Activated naive CD4-positive, alpha-beta T cell treated with anti-CD3 and anti-CD28 coated beads, Interleukin-2, amount 10 ng/mL, durations not matched to agents 7 days and 5 days (primary cell): ENCODE measurements at regions of chr15 and their contacts with region 1.

Region 1: DNA sequence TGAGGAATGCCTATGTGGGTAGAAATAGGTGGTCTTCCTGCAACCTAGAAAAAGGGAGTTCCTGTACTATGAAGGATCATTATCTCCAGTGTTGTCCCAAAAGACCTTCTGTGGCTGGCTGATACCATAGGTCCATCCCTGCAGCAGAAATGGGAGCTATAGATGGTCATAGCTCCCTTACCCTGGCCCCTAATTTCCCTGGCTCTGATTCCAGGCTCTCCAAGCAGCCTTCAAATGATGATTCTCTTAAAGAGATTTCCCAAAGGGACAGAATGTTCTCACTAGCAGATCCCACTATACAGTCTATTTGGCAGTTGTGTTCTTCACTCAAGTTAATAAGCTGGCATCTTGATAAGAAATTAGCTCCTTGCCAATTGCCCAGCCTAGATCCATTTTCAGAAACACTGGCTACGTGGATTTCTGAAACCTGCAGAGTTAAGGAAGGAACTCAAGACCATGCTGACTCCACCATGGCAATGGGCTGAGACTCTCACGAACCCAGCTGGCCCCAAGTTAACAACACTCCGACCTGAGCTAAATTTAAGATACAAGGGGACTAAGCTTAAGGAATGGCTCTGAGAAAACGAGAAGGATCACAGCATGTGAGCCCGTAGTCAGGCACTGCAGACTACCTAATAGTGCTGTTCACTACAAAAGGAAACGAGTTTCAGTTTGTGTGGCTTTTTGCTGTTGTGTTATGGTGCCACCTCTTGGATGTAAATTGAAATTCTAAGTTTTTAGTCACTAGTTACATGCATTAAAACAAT is 11.4 kb downstream of the C15orf40 start:
- DNase-seq: peak; percentile 55
- H3K4me3 Mint-ChIP-seq: peak overlapping the region; percentile 47
- H3K27ac Mint-ChIP-seq: no peak overlapping the region
- H3K4me1 Mint-ChIP-seq: peaks cover 8% of the 10 kb centered on the region
- H3K27me3 Mint-ChIP-seq: no peaks in the 10 kb centered on the region

Region 2: DNA sequence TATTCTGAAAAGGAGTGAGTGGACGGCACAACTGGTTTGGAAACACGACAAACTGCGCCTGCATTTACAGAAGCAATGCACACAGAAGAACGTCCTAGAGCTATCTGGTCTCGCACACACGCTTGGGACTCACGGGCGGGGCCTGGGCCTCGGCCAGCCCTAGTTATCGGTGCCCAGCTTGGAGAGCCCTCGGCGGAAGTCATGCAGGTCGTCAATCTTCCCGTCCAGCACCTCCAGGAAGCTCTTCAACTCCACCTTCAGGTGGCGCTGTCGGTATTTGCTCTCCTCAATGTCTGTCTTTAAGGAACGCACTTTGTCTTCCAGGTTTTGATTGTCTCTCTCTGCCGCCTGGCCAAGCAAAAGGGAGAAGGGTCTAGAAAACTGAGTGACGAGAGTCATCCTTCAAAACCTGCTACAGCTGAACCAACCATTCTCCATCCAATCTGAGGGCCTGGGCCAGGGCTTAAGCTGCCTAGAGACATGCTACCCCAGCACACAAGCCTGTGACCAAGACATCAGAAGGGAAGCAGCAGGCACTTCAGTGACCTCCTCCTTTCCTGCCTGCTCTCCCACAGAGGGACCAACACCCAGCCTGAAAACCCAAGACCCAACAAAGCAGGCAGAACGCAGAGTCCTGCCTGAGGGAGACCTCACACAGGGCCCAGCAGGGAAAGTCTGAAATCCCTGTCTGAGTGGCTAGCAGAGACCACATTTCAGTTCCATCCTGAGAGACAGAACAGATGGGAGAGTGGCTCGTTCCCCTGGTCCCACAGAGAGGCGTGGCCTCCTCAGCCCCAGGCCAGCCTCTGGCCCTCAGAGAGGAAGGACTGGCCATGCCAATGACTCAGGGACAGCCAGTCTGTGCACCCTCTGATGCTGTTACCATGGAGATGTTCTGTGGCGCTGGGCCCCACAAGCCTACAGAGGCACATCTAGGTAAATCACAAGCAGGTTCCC is 150.3 kb before region 1 on chr15:
- CTCF ChIA-PET with region 1: interaction called, 61 read pairs
- DNase-seq: peak; percentile 77
- H3K4me3 Mint-ChIP-seq: no peak overlapping the region
- H3K27ac Mint-ChIP-seq: no peak overlapping the region
- H3K4me1 Mint-ChIP-seq: peaks cover 19% of the 10 kb centered on the region
- H3K27me3 Mint-ChIP-seq: peaks cover 42% of the 10 kb centered on the region